ENCODE measurements at regions of chr11 and their contacts with region 1.

Region 1: GRCh38 chr11:70397983-70398833 is at the start of gene CTTN:
- DNase-seq: peak; percentile 68 to 88 (median 77)
- H3K4me3 ChIP-seq: peak within 1 kb of the TSS; percentile 59 to 96 (median 87)
- H3K27ac ChIP-seq: peak within 1 kb of the TSS in 57 of 59 donors; percentile 32 to 92 (median 77)
- H3K27me3 ChIP-seq: no peaks in the 10 kb centered on the region
- CTCF ChIP-seq: peak in 18 of 56 donors; percentile 5 to 49 (median 16)
- total RNA-seq, gene CTTN: 183 to 372 (median 269) TPM

Region 2: GRCh38 chr11:70270104-70270876 is 127.9 kb before region 1 on chr11 and contains the start of gene PPFIA1:
- intact Hi-C with region 1: loop called (anchors 5 to 10 kb)
- DNase-seq: peak; percentile 87 to 98 (median 94)
- H3K4me3 ChIP-seq: peak within 1 kb of the TSS; percentile 55 to 100 (median 92)
- H3K27ac ChIP-seq: peak within 1 kb of the TSS in 51 of 59 donors; percentile 5 to 90 (median 72)
- H3K27me3 ChIP-seq: no peaks in the 10 kb centered on the region
- CTCF ChIP-seq: peak in 13 of 56 donors; percentile 7 to 37 (median 19)
- total RNA-seq, gene PPFIA1: 65.9 to 132 (median 94.2) TPM